ENCODE measurements at regions of chr13 and their contacts with region 1.

Region 1: GRCh38 chr13:102724923-102725322 is 30.1 kb upstream of the METTL21C start:
- DNase-seq: peak; percentile 92
- H3K4me3 Mint-ChIP-seq: no peak overlapping the region
- H3K27ac Mint-ChIP-seq: no peak overlapping the region
- H3K4me1 Mint-ChIP-seq: peaks cover 14% of the 10 kb centered on the region
- H3K27me3 Mint-ChIP-seq: no peaks in the 10 kb centered on the region
- CTCF ChIP-seq: peak; percentile 72

Region 2: GRCh38 chr13:101780211-101780610 is 944.7 kb before region 1 on chr13:
- CTCF ChIA-PET with region 1: no interaction called
- POLR2A ChIA-PET with region 1: no interaction called
- intact Hi-C with region 1: no loop called
- DNase-seq: no peak
- H3K4me3 Mint-ChIP-seq: no peak overlapping the region
- H3K27ac Mint-ChIP-seq: no peak overlapping the region
- H3K4me1 Mint-ChIP-seq: no peaks in the 10 kb centered on the region
- H3K27me3 Mint-ChIP-seq: peaks cover 47% of the 10 kb centered on the region
- CTCF ChIP-seq: no peak

Region 3: DNA sequence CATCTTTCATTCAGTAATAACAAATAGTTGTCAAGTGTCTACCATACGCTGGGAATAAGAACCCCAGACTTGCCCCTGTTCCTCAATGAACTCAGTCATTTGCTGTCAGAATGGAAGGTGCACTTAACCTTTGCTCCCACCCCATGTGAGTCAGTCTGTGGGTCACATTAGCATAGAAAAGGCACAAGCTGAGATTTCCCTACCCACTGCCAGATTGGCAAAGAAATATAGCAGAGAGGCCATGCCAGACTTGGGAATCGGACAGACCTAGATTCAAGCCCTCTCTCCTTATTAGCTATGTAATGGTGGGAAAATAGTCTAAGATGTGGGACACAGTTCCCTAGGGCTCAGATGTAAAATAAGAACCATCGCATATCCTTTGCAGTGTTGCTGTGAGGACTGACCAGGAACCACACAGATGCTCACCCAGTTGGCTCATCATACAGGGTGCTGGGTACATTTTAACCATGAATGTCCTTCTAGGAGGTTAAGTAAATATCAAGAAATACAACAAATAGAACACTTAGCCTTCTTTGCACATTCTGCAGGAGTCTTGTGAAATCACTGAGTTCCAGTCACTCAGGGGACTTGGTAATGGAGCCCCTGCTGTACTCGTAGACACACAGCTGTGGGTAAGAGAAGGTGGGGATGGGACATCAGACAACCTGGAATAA is 541.3 kb before region 1 on chr13:
- CTCF ChIA-PET with region 1: no interaction called
- POLR2A ChIA-PET with region 1: no interaction called
- intact Hi-C with region 1: no loop called
- DNase-seq: no peak
- H3K4me3 Mint-ChIP-seq: no peak overlapping the region
- H3K27ac Mint-ChIP-seq: no peak overlapping the region
- H3K4me1 Mint-ChIP-seq: no peaks in the 10 kb centered on the region
- H3K27me3 Mint-ChIP-seq: no peaks in the 10 kb centered on the region
- CTCF ChIP-seq: no peak

Region 4: GRCh38 chr13:102596147-102597028 is 128.5 kb before region 1 on chr13 and contains the start of gene TPP2:
- CTCF ChIA-PET with region 1: interaction called, 48 read pairs
- POLR2A ChIA-PET with region 1: interaction called, 24 read pairs
- intact Hi-C with region 1: loop called (anchors 1 kb)
- DNase-seq: peak; percentile 97
- H3K4me3 Mint-ChIP-seq: peak within 1 kb of the TSS; percentile 82
- H3K27ac Mint-ChIP-seq: peak within 1 kb of the TSS; percentile 96
- H3K4me1 Mint-ChIP-seq: peaks cover 42% of the 10 kb centered on the region
- H3K27me3 Mint-ChIP-seq: no peaks in the 10 kb centered on the region
- CTCF ChIP-seq: no peak
- total RNA-seq, gene TPP2: 35.1 and 44.2 TPM in 2 replicates

Region 5: DNA sequence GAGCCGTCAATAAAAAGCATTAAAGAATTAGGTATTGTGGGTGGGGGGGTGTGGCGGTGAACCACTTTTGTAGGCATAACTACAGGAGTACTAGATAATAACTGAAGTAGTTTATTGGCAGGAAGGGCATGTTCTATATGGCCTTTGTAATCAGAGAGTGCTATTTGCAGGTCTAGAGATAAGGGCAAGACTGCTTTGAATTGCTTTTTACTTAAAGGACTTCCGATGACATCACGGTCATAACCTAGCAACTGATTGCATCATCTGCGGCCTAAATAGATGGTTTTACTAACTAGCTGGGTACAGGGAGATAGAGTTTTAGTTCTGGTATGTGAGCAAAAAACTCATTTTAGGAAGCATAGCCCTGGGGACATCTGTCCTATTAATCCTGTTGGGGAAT is 54.8 kb before region 1 on chr13:
- CTCF ChIA-PET with region 1: interaction called, 6 read pairs
- POLR2A ChIA-PET with region 1: no interaction called
- intact Hi-C with region 1: loop called (anchors 2 kb)
- DNase-seq: no peak
- H3K4me3 Mint-ChIP-seq: no peak overlapping the region
- H3K27ac Mint-ChIP-seq: no peak overlapping the region
- H3K4me1 Mint-ChIP-seq: no peaks in the 10 kb centered on the region
- H3K27me3 Mint-ChIP-seq: no peaks in the 10 kb centered on the region
- CTCF ChIP-seq: no peak

Region 6: DNA sequence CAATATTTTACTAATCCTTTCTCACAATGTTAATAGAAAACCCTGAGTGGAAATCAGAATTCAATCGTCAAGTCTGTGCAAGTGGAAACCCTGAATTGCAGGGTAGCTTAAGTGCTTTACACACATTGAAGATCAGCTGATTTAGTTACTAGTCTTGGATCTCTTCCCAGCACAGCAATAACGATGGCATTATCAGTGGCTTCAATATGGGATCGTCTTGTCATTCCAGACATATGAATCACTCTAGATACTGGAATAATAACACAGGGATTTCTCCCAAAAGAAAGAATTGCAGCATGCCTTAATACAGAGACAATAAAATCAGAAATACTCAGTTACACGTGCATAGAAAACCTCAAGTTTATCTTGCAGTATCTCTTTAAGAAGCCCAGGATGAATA is 17.5 kb before region 1 on chr13:
- CTCF ChIA-PET with region 1: interaction called, 52 read pairs
- POLR2A ChIA-PET with region 1: interaction called, 12 read pairs
- intact Hi-C with region 1: no loop called
- DNase-seq: peak; percentile 80
- H3K4me3 Mint-ChIP-seq: peak overlapping the region; percentile 15
- H3K27ac Mint-ChIP-seq: peak overlapping the region; percentile 70
- H3K4me1 Mint-ChIP-seq: peaks cover 43% of the 10 kb centered on the region
- H3K27me3 Mint-ChIP-seq: no peaks in the 10 kb centered on the region
- CTCF ChIP-seq: no peak

Region 7: GRCh38 chr13:102800145-102801041 is 75.5 kb after region 1 on chr13:
- CTCF ChIA-PET with region 1: interaction called, 6 read pairs
- POLR2A ChIA-PET with region 1: interaction called, 6 read pairs
- intact Hi-C with region 1: loop called (anchors 1 kb)
- DNase-seq: peak; percentile 83
- H3K4me3 Mint-ChIP-seq: peak overlapping the region; percentile 92
- H3K27ac Mint-ChIP-seq: peak overlapping the region; percentile 63
- H3K4me1 Mint-ChIP-seq: peaks cover 21% of the 10 kb centered on the region
- H3K27me3 Mint-ChIP-seq: no peaks in the 10 kb centered on the region
- CTCF ChIP-seq: peak; percentile 83

Region 8: GRCh38 chr13:102845630-102846260 is 120.8 kb after region 1 on chr13 and contains the start of gene ERCC5:
- CTCF ChIA-PET with region 1: interaction called, 4 read pairs
- POLR2A ChIA-PET with region 1: interaction called, 10 read pairs
- intact Hi-C with region 1: loop called (anchors 1 kb)
- DNase-seq: peak; percentile 96
- H3K4me3 Mint-ChIP-seq: peak within 1 kb of the TSS; percentile 83
- H3K27ac Mint-ChIP-seq: peak within 1 kb of the TSS; percentile 90
- H3K4me1 Mint-ChIP-seq: peaks cover 20% of the 10 kb centered on the region
- H3K27me3 Mint-ChIP-seq: no peaks in the 10 kb centered on the region
- CTCF ChIP-seq: no peak
- total RNA-seq, gene ERCC5: 68.1 and 68.8 TPM in 2 replicates

Measured in MCF 10A (cell line).